ENCODE measurements at regions of chr6 and their contacts with region 1.

Region 1: GRCh38 chr6:170405311-170405975 is 98.9 kb downstream of the FAM120B start:
- DNase-seq: peak; percentile 95
- H3K4me3 ChIP-seq: no peak overlapping the region
- CTCF ChIP-seq: no peak

Region 2: GRCh38 chr6:170329321-170329720 is 76.1 kb before region 1 on chr6:
- CTCF ChIA-PET with region 1: no interaction called
- POLR2A ChIA-PET with region 1: no interaction called
- DNase-seq: no peak
- H3K4me3 ChIP-seq: no peak overlapping the region
- CTCF ChIP-seq: no peak

Region 3: DNA sequence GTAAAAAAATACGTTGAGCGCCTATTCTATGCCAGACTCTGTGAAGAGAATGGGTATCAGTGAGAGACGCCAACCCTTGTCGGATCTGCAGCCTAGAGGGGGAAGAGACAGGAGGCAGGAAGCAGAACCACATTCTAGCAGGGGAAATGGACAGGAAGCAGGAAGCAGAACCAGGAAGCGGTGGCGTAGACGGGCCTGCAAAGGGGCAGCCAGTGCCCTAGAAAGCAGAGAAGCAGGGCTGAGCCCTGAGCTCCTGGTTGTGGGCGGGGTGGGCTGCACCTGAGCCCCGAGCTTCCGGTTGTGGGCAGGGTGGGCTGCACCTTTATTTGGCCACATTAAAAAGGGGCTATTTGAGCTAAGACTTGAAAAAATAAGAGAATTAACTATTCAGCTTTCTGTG is 26.9 kb before region 1 on chr6:
- CTCF ChIA-PET with region 1: no interaction called
- POLR2A ChIA-PET with region 1: no interaction called
- DNase-seq: no peak
- H3K4me3 ChIP-seq: no peak overlapping the region
- CTCF ChIP-seq: no peak

Region 4: GRCh38 chr6:170438402-170438753 is 32.9 kb after region 1 on chr6:
- CTCF ChIA-PET with region 1: interaction called, 6 read pairs
- POLR2A ChIA-PET with region 1: interaction called, 21 read pairs
- DNase-seq: peak; percentile 93
- H3K4me3 ChIP-seq: peak overlapping the region; percentile 44
- CTCF ChIP-seq: no peak

Measured in AG04449 (cell line).